Heart right ventricle (tissue), 16 donors: ENCODE measurements at regions of chr5 and their contacts with region 1.

Region 1: GRCh38 chr5:156505101-156505500 is 178.1 kb downstream of the SGCD start:
- DNase-seq: no peak
- ATAC-seq: peak in 1 of 8 donors; percentile 22
- H3K4me3 ChIP-seq: no peak overlapping the region
- H3K27ac ChIP-seq: no peak overlapping the region
- H3K4me1 ChIP-seq: peaks cover 0 to 21% (median 8%) of the 10 kb centered on the region in 9 donors
- H3K27me3 ChIP-seq: no peaks in the 10 kb centered on the region
- CTCF ChIP-seq: no peak

Region 2: GRCh38 chr5:155878991-155879575 is 626.0 kb before region 1 on chr5:
- intact Hi-C with region 1: loop called in 1 of 10 experiments (anchors 5 kb)
- DNase-seq: no peak
- ATAC-seq: no peak
- H3K4me3 ChIP-seq: no peak overlapping the region
- H3K27ac ChIP-seq: no peak overlapping the region
- H3K4me1 ChIP-seq: no peaks in the 10 kb centered on the region
- H3K27me3 ChIP-seq: no peaks in the 10 kb centered on the region
- CTCF ChIP-seq: no peak

Region 3: GRCh38 chr5:156469636-156470035 is 35.5 kb before region 1 on chr5:
- intact Hi-C with region 1: loop called in 1 of 10 experiments (anchors 1 kb)
- DNase-seq: no peak
- ATAC-seq: no peak
- H3K4me3 ChIP-seq: no peak overlapping the region
- H3K27ac ChIP-seq: no peak overlapping the region
- H3K4me1 ChIP-seq: peaks cover 5 to 20% (median 16%) of the 10 kb centered on the region in 9 donors
- H3K27me3 ChIP-seq: no peaks in the 10 kb centered on the region
- CTCF ChIP-seq: no peak